ENCODE measurements at regions of chr10 and their contacts with region 1.

Region 1: GRCh38 chr10:89643431-89644331 is 1.4 kb downstream of the PANK1 start:
- DNase-seq: peak; percentile 76
- ATAC-seq: peak; percentile 91 to 92

Region 2: GRCh38 chr10:89426230-89426868 is 217.3 kb before region 1 on chr10:
- intact Hi-C with region 1: no loop called
- DNase-seq: no peak
- ATAC-seq: peak; percentile 71 to 75

Region 3: GRCh38 chr10:89591111-89591795 is 52.4 kb before region 1 on chr10:
- intact Hi-C with region 1: loop called in 1 of 2 experiments (anchors 5 kb)
- DNase-seq: no peak
- ATAC-seq: peak; percentile 62 to 66

Region 4: DNA sequence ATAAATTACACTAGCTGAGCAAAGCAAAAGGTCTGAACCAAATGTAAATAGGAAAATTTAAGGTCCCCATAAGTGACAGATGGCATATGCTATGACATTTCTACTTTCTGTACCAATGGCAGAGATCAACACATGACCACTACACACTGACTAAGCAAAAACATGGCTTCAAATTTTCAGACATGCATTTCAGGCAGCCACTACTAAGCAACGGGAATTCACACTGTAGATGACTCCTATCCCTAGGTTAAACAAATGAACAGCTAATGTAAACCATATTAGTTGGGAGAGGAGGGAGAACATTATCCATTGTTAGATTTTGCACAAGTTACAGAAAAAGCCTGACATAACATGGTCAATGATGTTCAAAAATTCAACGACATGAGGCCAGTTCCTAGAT is 46.3 kb after region 1 on chr10:
- intact Hi-C with region 1: no loop called
- DNase-seq: no peak
- ATAC-seq: no peak

Region 5: DNA sequence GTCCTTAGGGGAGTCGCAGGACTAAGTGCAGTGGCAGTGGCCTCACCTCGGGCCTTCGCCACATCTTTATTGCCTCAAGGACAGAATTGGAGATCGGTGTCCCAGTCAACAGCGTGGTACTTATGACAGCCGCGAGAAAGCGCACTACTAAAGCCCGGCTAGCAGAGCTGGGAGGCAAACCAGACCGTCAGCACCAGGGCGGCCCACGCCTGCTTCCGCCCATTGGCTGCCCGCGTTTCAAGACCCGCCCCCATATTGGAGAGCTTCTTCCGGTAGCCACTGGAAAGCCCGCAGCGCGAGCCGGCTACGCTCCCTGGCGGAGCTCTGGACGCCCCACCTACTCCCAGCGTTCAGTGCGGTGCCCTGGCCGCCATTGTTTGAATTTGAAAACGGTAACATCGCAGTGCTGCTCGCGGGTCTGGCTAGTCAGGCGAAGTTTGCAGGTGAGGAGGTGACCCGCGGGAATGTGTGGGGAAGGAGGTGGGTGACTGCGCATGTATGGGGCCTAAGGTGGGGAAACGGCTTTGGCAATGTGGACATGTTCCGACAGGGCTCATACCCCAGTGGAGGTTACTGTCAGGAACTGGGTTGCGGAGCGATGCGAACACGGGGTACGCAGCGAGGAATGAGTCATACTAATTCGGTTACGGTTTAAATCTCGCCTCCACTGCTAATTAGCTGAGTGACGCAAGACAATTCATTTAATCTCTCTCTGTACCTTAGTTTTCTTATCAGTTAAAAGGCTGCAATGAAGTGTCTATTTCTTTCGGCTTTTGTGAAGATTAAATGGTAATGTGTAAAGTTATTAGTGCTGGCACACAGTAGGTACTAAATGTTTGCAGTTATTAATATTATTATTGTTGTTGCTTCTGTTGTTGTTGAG is 57.8 kb after region 1 on chr10 and contains the start of gene KIF20B:
- intact Hi-C with region 1: loop called in 1 of 2 experiments (anchors 2 kb)
- DNase-seq: peak; percentile 96
- ATAC-seq: peak; percentile 100
- total RNA-seq, gene KIF20B: 1.6 to 4.0 TPM

Region 6: DNA sequence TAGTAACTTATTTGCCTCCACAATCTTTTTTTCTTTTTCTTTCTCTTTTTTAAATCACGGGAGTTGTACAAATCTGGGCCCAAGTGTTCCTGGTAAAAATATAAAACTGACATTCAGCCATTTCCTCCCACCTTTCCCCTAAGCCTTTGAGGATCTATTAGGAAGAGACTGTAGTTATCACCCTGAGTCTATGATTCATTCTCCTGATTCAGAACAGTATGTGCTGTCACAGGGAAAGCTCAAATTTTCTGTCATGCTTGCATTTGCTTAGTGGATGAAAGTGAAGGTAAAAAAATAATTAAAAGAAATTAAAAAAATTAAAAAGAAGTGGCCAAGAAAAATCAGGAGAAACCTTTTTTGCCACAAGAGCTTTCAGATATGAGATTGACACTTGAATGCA is 129.4 kb after region 1 on chr10:
- intact Hi-C with region 1: no loop called
- DNase-seq: no peak
- ATAC-seq: no peak

Region 7: DNA sequence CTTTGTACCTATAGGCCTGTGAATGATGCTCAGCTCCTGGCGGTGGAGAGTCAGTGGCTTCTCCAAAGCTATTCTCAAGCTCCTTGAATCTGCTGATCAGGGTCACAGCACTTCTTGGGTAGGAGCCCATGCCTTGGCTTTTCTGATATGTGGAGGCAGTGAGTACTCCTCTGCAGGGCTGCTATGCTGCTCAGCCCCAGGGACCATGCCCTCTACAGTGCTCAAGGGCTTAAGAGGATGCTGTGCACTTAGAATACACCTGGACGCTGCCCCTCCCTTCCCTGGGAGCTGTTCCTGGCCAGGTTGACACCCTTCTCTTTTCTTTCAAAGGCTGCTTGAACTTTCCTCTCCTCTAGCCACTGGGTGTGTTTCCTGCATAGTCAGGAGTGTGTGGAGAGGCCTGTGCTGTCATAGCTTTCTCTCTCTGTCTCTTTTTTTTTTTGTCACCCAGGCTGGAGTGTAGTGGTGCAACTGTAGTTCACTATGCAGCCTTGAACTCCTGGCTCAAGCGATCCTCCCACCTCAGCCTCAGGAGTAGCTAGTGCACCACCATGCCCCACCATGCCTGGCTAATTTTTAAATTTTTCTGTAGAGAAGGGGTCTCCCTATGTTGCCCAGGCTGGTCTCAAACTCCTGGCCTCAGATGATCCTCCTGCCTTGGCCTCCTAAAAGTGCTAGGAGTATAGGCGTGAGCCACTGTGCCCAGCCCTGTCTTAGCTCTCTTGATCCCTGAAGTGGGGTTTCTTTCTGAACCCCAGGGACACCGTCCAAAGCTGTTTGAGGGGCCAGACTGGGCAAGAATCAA is 171.6 kb after region 1 on chr10:
- intact Hi-C with region 1: no loop called
- DNase-seq: no peak
- ATAC-seq: no peak

Measured in left cardiac atrium (tissue), 4 donors.